ENCODE measurements at regions of chr12 and their contacts with region 1.

Region 1: GRCh38 chr12:65823513-65824375 is 539 bp upstream of the HMGA2 start:
- DNase-seq: peak; percentile 61 to 76
- H3K4me3 ChIP-seq: peak overlapping the region; percentile 70
- H3K4me3 Mint-ChIP-seq: peak overlapping the region; percentile 97
- H3K27ac Mint-ChIP-seq: peak overlapping the region; percentile 84
- H3K4me1 ChIP-seq: peaks cover 10% of the 10 kb centered on the region; the same call in 1 of the 2 replicates
- H3K4me1 Mint-ChIP-seq: peaks cover 5% of the 10 kb centered on the region
- H3K27me3 ChIP-seq: no peaks in the 10 kb centered on the region
- H3K27me3 Mint-ChIP-seq: no peaks in the 10 kb centered on the region
- CTCF ChIP-seq: no peak

Region 2: DNA sequence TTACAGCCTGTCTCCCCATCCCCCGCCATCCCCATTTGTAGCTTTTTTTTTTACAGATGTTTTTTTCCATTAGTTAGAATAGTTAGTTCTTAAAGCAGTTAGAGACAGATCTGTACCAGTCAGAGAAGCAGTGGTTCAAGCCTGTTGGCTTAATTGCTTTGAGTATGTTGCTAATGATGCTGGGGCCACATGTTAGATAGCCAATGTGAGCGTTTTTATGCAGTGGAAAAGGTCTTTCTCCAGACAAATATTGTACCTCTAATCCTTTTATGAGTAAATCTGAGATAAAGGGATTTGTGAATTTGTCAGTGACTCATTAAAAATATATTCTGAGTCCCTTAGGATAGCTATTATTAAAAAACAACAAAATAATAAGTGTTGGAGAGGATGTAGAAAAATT is 391.1 kb before region 1 on chr12:
- CTCF ChIA-PET with region 1: no interaction called
- POLR2A ChIA-PET with region 1: no interaction called
- intact Hi-C with region 1: no loop called
- DNase-seq: no peak
- H3K4me3 ChIP-seq: no peak overlapping the region
- H3K4me3 Mint-ChIP-seq: no peak overlapping the region
- H3K27ac Mint-ChIP-seq: no peak overlapping the region
- H3K4me1 ChIP-seq: no peaks in the 10 kb centered on the region
- H3K4me1 Mint-ChIP-seq: no peaks in the 10 kb centered on the region
- H3K27me3 ChIP-seq: no peaks in the 10 kb centered on the region
- H3K27me3 Mint-ChIP-seq: peaks cover 3% of the 10 kb centered on the region
- CTCF ChIP-seq: no peak

Region 3: DNA sequence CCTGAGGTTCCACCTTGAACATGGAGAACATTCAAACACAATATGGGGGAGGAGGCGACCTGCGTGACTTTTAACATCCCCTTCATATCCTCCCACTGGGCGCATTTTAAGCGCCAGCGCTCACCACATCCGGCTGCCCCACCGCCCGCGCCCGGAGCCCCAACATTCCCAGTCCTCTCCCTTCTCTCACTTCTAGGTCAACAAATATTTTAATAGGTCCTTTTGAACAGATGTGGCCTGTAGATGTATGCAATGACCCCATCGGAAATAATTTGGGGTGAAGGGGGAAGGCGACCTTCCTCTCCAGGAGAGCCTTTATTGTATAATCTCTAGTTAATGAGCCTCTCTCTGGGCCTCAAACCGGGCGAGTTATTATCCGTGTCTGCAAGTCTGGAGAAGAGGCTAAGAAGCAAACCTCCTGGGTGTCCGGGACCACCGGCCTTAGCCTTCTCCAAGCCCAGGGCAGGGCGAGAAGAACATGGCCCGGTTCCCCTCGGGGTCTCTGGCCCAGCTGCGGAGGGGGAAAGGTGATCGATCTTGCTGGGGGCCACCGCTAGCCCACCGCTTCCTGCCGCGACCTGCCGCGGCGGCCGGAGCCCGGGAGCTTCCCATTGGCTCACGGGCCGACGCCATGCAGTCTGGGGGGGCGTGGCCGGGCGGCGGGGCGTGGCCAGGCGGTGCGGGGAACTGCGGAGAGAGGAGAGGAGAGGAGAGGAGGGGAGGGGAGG is 82.7 kb before region 1 on chr12:
- CTCF ChIA-PET with region 1: no interaction called
- POLR2A ChIA-PET with region 1: no interaction called
- intact Hi-C with region 1: loop called (anchors 5 kb)
- DNase-seq: peak; percentile 86 to 90
- H3K4me3 ChIP-seq: peak overlapping the region; percentile 83
- H3K4me3 Mint-ChIP-seq: peak overlapping the region; percentile 94
- H3K27ac Mint-ChIP-seq: no peak overlapping the region
- H3K4me1 ChIP-seq: 0 out of 2 replicates have a peak, but pooled peaks cover 4% of the 10 kb centered on the region
- H3K4me1 Mint-ChIP-seq: peaks cover 9% of the 10 kb centered on the region
- H3K27me3 ChIP-seq: no peaks in the 10 kb centered on the region
- H3K27me3 Mint-ChIP-seq: no peaks in the 10 kb centered on the region
- CTCF ChIP-seq: no peak

Region 4: GRCh38 chr12:65810036-65810435 is 13.7 kb before region 1 on chr12:
- CTCF ChIA-PET with region 1: no interaction called
- POLR2A ChIA-PET with region 1: no interaction called
- intact Hi-C with region 1: no loop called
- DNase-seq: no peak
- H3K4me3 ChIP-seq: no peak overlapping the region
- H3K4me3 Mint-ChIP-seq: no peak overlapping the region
- H3K27ac Mint-ChIP-seq: no peak overlapping the region
- H3K4me1 ChIP-seq: no peaks in the 10 kb centered on the region
- H3K4me1 Mint-ChIP-seq: no peaks in the 10 kb centered on the region
- H3K27me3 ChIP-seq: no peaks in the 10 kb centered on the region
- H3K27me3 Mint-ChIP-seq: no peaks in the 10 kb centered on the region
- CTCF ChIP-seq: no peak

Measured in Caco-2 (cell line).